MCF 10A (cell line): ENCODE measurements at regions of chr2 and their contacts with region 1.

Region 1: DNA sequence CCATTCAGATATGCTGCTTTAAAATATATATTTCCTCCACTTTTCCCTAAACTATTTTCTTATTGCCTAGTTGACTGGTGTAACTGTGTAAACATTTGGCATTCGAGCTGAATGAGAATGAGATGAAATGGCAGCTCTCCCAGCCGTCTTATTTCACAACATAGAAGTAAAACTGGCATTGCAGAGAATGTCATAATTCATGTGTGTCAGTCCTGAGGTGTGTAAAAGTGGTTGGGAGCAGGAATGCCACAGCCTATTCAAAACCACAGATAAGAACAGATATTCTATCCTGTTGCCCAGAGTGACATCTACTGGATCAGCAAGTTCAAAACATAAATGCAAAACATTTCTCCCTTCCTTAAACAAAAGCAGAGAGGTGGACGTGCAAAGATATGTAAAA is 565.5 kb upstream of the CHAC2 start:
- DNase-seq: peak; percentile 91
- H3K4me3 Mint-ChIP-seq: no peak overlapping the region
- H3K27ac Mint-ChIP-seq: peak overlapping the region; percentile 76
- H3K4me1 Mint-ChIP-seq: peaks cover 15% of the 10 kb centered on the region
- H3K27me3 Mint-ChIP-seq: no peaks in the 10 kb centered on the region
- CTCF ChIP-seq: peak; percentile 55

Region 2: DNA sequence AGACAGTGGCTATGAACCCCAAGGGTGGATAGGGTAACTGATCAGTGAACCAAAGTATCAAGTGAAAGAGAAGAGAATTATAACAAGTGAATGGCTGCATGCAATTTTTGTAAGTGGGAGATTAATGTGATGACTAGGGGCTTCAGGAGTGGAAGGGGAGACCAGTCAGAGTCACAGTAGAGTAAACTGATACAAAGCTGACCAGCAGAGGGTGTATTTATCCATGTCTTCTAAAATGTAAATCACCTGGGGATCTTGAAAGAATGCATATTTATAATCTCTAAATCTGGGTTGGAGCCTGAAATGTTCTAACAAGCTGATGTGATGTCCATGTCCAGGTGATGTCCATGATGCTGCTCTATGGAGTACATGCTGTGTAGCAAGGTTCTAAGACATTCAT is 785.7 kb before region 1 on chr2:
- CTCF ChIA-PET with region 1: interaction called, 3 read pairs
- POLR2A ChIA-PET with region 1: no interaction called
- intact Hi-C with region 1: loop called (anchors 1 kb)
- DNase-seq: peak; percentile 33
- H3K4me3 Mint-ChIP-seq: no peak overlapping the region
- H3K27ac Mint-ChIP-seq: no peak overlapping the region
- H3K4me1 Mint-ChIP-seq: no peaks in the 10 kb centered on the region
- H3K27me3 Mint-ChIP-seq: no peaks in the 10 kb centered on the region
- CTCF ChIP-seq: peak; percentile 15

Region 3: GRCh38 chr2:52931660-52932059 is 270.4 kb before region 1 on chr2:
- CTCF ChIA-PET with region 1: no interaction called
- POLR2A ChIA-PET with region 1: no interaction called
- intact Hi-C with region 1: no loop called
- DNase-seq: no peak
- H3K4me3 Mint-ChIP-seq: no peak overlapping the region
- H3K27ac Mint-ChIP-seq: no peak overlapping the region
- H3K4me1 Mint-ChIP-seq: peaks cover 36% of the 10 kb centered on the region
- H3K27me3 Mint-ChIP-seq: no peaks in the 10 kb centered on the region
- CTCF ChIP-seq: no peak

Region 4: DNA sequence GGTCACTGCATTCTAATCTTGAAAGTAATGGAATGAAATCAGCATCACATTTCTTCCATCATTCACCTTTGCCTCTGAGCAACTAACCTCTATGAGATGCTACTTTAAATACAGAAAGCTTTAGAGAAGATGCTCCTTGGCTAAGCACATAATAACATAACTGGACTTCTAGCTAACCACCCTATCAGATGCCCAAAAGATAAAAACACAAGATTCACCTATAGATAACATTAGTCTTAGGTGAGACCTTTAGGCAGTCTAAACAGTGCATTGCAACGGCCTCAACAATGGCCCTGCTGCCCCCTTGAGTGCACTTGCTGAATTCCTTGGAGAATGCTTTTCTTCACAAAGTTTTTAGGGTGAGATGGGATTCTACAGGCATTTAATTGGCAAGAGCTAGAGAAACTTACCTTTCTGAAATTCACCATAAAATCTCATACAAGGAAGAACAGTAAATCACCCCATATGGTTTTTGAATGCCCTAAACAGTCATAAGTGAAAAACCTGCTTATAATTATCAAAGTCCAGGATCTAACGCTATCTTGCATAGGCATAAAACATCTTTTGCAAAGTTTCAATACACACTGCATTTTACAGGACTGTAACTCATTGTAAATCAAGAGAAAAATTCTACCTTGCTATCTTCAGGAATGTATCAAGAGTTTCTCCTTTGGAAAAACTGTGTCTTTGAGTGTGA is 225.7 kb before region 1 on chr2:
- CTCF ChIA-PET with region 1: interaction called, 3 read pairs
- POLR2A ChIA-PET with region 1: no interaction called
- intact Hi-C with region 1: loop called (anchors 1 kb)
- DNase-seq: peak; percentile 63
- H3K4me3 Mint-ChIP-seq: no peak overlapping the region
- H3K27ac Mint-ChIP-seq: no peak overlapping the region
- H3K4me1 Mint-ChIP-seq: no peaks in the 10 kb centered on the region
- H3K27me3 Mint-ChIP-seq: no peaks in the 10 kb centered on the region
- CTCF ChIP-seq: peak; percentile 70

Region 5: DNA sequence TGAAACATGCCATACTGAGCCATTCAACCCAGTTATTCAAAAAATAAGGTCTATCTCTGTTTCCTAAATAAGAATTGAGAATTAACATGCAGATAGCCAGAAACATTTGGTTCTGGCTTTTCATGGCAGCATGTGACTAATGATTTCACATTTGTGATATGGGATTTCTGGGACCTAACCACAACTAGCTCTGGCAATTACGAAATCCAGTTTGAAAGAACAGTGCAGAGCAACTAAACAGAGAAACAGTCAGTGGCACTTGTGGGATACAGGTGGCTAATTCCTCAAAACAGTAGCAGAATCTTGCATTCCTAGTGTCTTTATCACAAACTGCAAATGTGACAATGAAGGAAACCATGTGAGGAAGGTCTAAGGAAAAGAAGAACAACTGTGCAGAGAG is 72.2 kb before region 1 on chr2:
- CTCF ChIA-PET with region 1: interaction called, 3 read pairs
- POLR2A ChIA-PET with region 1: no interaction called
- intact Hi-C with region 1: loop called (anchors 2 kb)
- DNase-seq: peak; percentile 73
- H3K4me3 Mint-ChIP-seq: peak overlapping the region; percentile 14
- H3K27ac Mint-ChIP-seq: peak overlapping the region; percentile 43
- H3K4me1 Mint-ChIP-seq: peaks cover 19% of the 10 kb centered on the region
- H3K27me3 Mint-ChIP-seq: no peaks in the 10 kb centered on the region
- CTCF ChIP-seq: no peak

Region 6: GRCh38 chr2:53212576-53212975 is 10.5 kb after region 1 on chr2:
- CTCF ChIA-PET with region 1: interaction called, 14 read pairs
- POLR2A ChIA-PET with region 1: interaction called, 3 read pairs
- intact Hi-C with region 1: no loop called
- DNase-seq: no peak
- H3K4me3 Mint-ChIP-seq: no peak overlapping the region
- H3K27ac Mint-ChIP-seq: no peak overlapping the region
- H3K4me1 Mint-ChIP-seq: no peaks in the 10 kb centered on the region
- H3K27me3 Mint-ChIP-seq: no peaks in the 10 kb centered on the region
- CTCF ChIP-seq: no peak

Region 7: GRCh38 chr2:53715568-53715967 is 513.5 kb after region 1 on chr2:
- CTCF ChIA-PET with region 1: interaction called, 3 read pairs
- POLR2A ChIA-PET with region 1: no interaction called
- intact Hi-C with region 1: loop called (anchors 10 kb)
- DNase-seq: peak; percentile 14
- H3K4me3 Mint-ChIP-seq: no peak overlapping the region
- H3K27ac Mint-ChIP-seq: no peak overlapping the region
- H3K4me1 Mint-ChIP-seq: no peaks in the 10 kb centered on the region
- H3K27me3 Mint-ChIP-seq: no peaks in the 10 kb centered on the region
- CTCF ChIP-seq: peak; percentile 39